ENCODE measurements at regions of chr1 and their contacts with region 1.

Region 1: DNA sequence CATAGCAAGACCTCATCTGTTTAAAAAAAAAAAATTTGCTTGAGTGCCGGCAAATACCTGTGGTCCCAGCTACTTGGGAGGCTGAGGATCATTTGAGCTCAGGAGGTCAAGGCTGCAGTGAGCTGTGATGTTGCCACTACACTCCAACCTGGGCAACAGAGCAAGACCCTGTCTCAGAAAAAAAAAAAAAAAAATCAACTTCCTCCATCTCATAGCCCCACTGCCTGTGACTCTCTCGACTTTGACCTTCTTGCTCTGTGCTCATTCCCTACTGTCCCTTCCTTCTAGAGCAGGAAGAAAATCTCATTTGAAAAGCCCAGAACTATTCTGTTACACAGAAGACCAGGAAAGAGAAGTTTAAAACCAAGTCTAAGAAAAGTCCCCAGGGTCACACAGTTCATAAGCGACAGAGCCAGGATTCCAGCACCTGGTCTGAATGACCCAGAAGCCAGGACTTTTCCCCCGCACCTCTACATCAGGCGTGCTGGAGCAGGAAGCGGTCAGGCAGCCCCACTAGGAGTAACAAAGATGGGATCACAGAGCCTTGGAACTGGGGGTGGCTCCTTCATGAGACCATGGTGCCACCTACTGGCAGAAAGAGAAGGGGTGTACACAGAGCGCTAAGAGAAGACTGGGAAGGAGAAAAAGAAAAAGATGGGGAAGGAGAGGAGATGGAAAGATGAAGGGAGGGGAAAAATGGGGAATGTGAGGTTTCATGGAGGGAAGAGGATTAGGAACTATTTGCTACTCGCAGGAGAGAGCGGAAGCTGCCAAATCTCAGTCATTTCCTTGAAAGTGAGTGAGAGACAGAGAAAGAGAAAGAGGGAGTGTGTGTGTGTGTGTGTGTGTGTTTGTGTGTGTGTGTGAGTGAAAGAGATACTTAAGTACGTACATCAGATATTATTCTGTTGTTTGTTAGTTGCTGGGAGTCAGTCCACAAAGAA is 3.1 kb upstream of the P3R3URF start:
- DNase-seq: peak; percentile 27 to 82 (median 68)
- ATAC-seq: peak; percentile 84
- H3K4me3 ChIP-seq: no peak overlapping the region
- H3K4me3 Mint-ChIP-seq: no peak overlapping the region
- H3K27ac ChIP-seq: no peak overlapping the region
- H3K27ac Mint-ChIP-seq: no peak overlapping the region
- H3K4me1 ChIP-seq: peaks cover 1% of the 10 kb centered on the region
- H3K4me1 Mint-ChIP-seq: peaks cover 5% of the 10 kb centered on the region
- H3K27me3 ChIP-seq: peaks cover 0 to 2% of the 10 kb centered on the region in 2 experiments
- H3K27me3 Mint-ChIP-seq: no peaks in the 10 kb centered on the region
- CTCF ChIP-seq: peak; percentile 94

Region 2: DNA sequence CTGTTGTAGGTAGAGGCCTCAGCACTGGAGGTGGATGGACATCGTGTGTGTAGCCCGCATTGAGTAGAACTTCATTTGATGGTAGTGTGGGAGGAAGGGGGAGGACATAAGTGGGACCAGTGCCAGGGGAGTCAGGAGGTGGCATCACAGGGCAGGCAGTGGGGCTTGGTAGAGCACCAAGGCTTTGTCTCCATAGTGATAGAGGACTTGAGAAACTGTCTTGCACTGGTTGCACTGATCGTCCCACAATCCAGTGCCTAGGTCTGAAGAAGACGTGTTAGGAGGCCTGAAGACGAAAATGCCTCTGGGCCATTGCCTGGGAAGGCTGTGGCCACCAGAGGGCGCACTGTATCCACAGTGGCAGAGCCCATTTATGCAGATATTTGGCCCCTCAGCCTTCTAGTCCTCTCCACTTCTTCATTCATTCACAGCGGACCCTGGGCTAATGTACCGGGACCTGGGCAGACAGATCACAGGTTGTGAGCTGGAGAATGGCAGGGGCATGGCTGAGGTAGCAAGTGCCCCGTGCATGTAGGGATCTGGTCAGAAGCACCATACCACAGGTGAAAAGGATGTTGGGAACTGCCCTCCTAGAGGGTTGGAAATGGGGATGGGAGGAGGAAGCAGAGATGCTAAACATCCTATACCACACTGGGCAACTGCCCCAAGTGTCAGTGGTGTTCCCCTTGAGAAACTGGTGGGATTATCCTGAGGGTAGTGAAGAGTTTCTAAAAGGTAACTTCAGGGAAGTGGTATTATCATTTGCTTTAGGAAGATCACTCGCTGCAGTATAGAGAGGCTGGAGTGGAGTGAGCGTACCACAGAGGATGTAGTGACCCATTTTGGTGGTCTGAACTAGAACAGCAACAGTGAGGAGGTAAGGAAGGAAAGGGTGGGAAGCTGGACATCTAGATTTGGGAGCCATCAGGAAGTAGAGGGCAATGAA is 142.2 kb before region 1 on chr1:
- CTCF ChIA-PET with region 1: interaction called, 207 read pairs
- POLR2A ChIA-PET with region 1: no interaction called
- intact Hi-C with region 1: loop called (anchors 1 kb)
- DNase-seq: peak; percentile 77 to 94 (median 85)
- ATAC-seq: peak; percentile 71
- H3K4me3 ChIP-seq: no peak overlapping the region
- H3K4me3 Mint-ChIP-seq: no peak overlapping the region
- H3K27ac ChIP-seq: no peak overlapping the region
- H3K27ac Mint-ChIP-seq: no peak overlapping the region
- H3K4me1 ChIP-seq: no peaks in the 10 kb centered on the region
- H3K4me1 Mint-ChIP-seq: no peaks in the 10 kb centered on the region
- H3K27me3 ChIP-seq: no peaks in the 10 kb centered on the region
- H3K27me3 Mint-ChIP-seq: no peaks in the 10 kb centered on the region
- CTCF ChIP-seq: peak; percentile 97